PC-3 (cell line): ENCODE measurements at regions of chr7 and their contacts with region 1.

Region 1: DNA sequence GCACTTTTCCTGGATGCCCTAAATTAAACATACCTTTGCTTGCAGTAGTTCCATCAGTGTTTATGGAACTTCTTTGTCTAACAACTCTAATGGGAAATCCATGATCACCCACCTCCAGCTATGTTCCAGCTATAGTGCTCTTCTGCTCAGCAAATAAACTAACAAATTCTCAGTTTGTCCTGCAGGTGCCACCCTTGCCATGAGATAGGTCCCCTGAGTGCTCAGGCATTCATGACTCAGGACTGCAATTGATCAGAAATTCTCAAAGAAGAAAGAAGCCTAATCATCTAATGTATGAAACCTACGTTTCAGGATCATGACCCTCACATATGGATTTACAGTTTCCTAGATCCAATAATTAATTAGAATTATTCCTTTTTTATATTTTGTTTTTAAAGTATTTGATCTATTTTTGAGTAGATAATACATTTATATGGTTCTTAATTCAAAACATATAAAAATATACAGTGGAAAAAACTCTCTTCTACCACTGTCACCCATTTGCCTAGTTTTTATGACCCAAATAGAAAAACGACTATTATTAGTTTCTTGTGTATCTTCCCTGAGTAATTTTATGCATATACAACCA is 48.7 kb upstream of the DYNC1I1 start:
- DNase-seq: peak; percentile 68
- ATAC-seq: peak; percentile 93
- H3K4me3 ChIP-seq: no peak overlapping the region
- H3K27ac ChIP-seq: no peak overlapping the region
- H3K4me1 ChIP-seq: no peaks in the 10 kb centered on the region
- H3K27me3 ChIP-seq: peaks cover 20% of the 10 kb centered on the region
- CTCF ChIP-seq: peak; percentile 73

Region 2: DNA sequence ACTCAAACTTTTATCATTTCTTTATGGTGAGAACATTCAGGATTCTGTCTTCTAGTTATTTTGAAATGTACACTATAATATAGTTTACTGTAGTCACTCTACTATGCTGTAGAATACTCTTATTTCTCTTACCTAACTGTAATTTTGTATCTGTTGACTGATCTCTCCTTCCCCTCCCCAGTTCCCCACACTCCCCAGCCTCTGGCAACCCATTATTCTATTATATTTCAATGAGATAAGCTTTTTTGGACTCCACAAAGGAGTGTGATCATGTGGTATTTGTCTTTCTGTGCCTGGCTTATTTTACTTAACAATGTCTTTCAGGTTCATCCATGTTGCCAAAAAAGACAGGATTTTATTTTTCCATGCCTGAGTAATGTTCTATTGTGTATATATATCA is 22.8 kb before region 1 on chr7:
- CTCF ChIA-PET with region 1: no interaction called
- POLR2A ChIA-PET with region 1: no interaction called
- intact Hi-C with region 1: no loop called
- DNase-seq: no peak
- ATAC-seq: no peak
- H3K4me3 ChIP-seq: no peak overlapping the region
- H3K27ac ChIP-seq: no peak overlapping the region
- H3K4me1 ChIP-seq: no peaks in the 10 kb centered on the region
- H3K27me3 ChIP-seq: peaks cover 22% of the 10 kb centered on the region
- CTCF ChIP-seq: no peak

Region 3: GRCh38 chr7:95794917-95795515 is 71.3 kb after region 1 on chr7:
- CTCF ChIA-PET with region 1: interaction called, 10 read pairs
- POLR2A ChIA-PET with region 1: no interaction called
- intact Hi-C with region 1: loop called (anchors 1 kb)
- DNase-seq: peak; percentile 62
- ATAC-seq: peak; percentile 74
- H3K4me3 ChIP-seq: no peak overlapping the region
- H3K27ac ChIP-seq: no peak overlapping the region
- H3K4me1 ChIP-seq: no peaks in the 10 kb centered on the region
- H3K27me3 ChIP-seq: no peaks in the 10 kb centered on the region
- CTCF ChIP-seq: peak; percentile 76

Region 4: GRCh38 chr7:95843286-95843685 is 119.6 kb after region 1 on chr7:
- CTCF ChIA-PET with region 1: interaction called, 6 read pairs
- POLR2A ChIA-PET with region 1: no interaction called
- intact Hi-C with region 1: loop called (anchors 2 kb)
- DNase-seq: peak; percentile 14
- ATAC-seq: peak; percentile 81
- H3K4me3 ChIP-seq: no peak overlapping the region
- H3K27ac ChIP-seq: no peak overlapping the region
- H3K4me1 ChIP-seq: no peaks in the 10 kb centered on the region
- H3K27me3 ChIP-seq: no peaks in the 10 kb centered on the region
- CTCF ChIP-seq: peak; percentile 52

Region 5: DNA sequence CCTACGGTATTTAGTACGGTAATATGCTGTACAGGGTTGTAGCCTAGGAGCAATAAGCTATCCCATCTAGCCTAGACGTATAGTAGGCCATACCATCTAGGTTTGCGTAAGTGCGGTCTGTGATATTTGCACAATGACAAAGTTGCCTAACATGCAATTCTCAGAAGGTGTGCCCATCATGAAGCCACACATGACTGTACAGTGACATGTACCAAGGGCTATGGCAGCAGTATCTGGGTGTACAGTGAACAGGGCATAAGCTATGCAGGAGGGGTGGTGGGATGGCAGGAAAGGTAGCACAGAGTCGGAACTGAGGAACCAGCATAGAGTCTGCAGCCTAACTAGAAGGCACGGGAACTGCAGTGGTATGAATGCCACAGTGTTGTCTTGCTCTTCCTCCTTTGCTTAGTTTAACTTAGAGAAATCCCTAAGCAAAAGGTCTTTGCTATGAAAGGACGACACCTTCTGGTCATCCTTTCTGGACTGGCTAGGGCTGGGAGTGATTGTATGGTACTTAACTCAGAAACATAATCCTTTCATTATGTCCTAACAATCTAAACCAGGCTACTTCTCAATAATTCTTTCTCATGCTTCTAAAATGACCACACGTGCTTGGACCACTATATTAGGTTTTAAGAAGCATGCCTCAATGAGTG is 142.2 kb after region 1 on chr7:
- CTCF ChIA-PET with region 1: interaction called, 23 read pairs
- POLR2A ChIA-PET with region 1: interaction called, 5 read pairs
- intact Hi-C with region 1: loop called (anchors 1 kb)
- DNase-seq: peak; percentile 50
- ATAC-seq: peak; percentile 91
- H3K4me3 ChIP-seq: no peak overlapping the region
- H3K27ac ChIP-seq: no peak overlapping the region
- H3K4me1 ChIP-seq: peaks cover 7% of the 10 kb centered on the region; the same call in 1 of the 2 replicates
- H3K27me3 ChIP-seq: no peaks in the 10 kb centered on the region
- CTCF ChIP-seq: peak; percentile 60

Region 6: DNA sequence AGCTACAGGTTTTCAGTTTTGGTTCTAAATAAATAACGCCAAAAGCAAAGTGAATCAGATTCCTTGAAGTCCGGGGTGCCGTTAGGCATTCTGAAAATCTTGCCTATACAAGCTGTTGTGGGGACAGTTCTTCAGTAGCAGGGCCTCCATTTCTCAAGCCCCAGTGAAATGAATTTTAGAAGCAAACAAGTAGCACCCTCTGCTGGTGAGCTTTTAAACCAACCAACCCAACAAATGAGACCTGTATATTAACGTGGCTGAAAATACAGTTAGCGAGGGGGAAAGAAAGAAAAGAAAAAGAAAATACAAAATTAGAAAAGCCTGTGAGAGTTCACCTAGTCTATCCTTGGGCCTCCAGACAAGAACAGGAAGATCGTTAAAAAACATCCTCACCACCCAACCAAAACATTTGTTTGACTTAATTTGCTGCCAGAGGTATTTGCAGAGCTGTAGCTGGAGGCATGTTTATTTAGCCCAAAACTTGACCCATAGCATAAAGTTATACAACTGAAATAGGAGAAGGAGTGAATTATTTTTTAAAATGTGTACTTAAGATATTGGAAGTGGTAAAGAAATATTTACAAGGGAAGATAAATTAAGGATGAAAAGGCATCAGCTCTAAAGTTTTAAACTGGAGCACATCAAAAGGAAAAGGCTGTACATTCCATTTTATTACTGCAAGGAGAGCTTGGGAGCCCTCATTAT is 147.5 kb after region 1 on chr7:
- CTCF ChIA-PET with region 1: interaction called, 23 read pairs
- POLR2A ChIA-PET with region 1: no interaction called
- intact Hi-C with region 1: loop called (anchors 1 kb)
- DNase-seq: peak; percentile 63
- ATAC-seq: peak; percentile 75
- H3K4me3 ChIP-seq: no peak overlapping the region
- H3K27ac ChIP-seq: no peak overlapping the region
- H3K4me1 ChIP-seq: no peaks in the 10 kb centered on the region
- H3K27me3 ChIP-seq: no peaks in the 10 kb centered on the region
- CTCF ChIP-seq: peak; percentile 80

Region 7: DNA sequence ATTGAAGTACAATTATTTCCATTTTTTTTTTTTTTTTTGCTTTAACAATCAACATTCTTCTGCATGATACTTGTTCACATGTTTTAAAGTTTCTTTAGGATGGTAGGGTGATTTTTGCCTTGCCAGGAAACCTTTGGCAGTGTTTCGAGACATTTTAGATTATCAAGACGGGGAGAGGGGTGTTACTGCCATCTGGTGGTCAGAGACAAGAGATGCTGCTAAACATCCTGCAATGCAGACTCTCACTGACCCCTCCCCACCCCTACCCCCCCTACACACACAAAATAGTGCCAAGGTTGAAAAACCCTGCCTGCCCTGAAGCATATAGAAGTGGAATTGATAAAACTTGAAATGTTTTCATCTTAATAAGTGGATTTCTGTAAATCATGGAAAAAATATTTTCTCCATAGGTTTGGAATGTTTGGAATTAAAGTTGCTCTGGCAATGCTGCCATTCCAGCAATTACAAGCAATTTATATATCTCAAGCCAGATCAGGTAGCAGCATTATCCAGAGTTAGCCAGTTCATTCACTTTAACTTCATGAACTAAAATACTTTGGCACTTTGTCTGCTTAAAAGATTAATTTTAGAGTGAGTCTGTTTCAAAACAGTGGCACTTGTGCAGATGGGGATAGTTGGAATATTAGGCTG is 1455.9 kb after region 1 on chr7:
- CTCF ChIA-PET with region 1: no interaction called
- POLR2A ChIA-PET with region 1: no interaction called
- intact Hi-C with region 1: loop called (anchors 10 kb)
- DNase-seq: peak; percentile 60
- ATAC-seq: peak; percentile 71
- H3K4me3 ChIP-seq: no peak overlapping the region
- H3K27ac ChIP-seq: no peak overlapping the region
- H3K4me1 ChIP-seq: no peaks in the 10 kb centered on the region
- H3K27me3 ChIP-seq: no peaks in the 10 kb centered on the region
- CTCF ChIP-seq: peak; percentile 65; the same call in 1 of the 2 replicates